Caco-2 (cell line): ENCODE measurements at regions of chr20 and their contacts with region 1.

Region 1: GRCh38 chr20:4864311-4864752 is 137.0 kb downstream of the SLC23A2 start:
- DNase-seq: peak in 1 of 2 experiments; percentile 30
- H3K4me3 ChIP-seq: no peak overlapping the region
- H3K4me3 Mint-ChIP-seq: no peak overlapping the region
- H3K27ac Mint-ChIP-seq: peak overlapping the region; percentile 26
- H3K4me1 ChIP-seq: peaks cover 6% of the 10 kb centered on the region
- H3K4me1 Mint-ChIP-seq: peaks cover 25% of the 10 kb centered on the region
- H3K27me3 ChIP-seq: no peaks in the 10 kb centered on the region
- H3K27me3 Mint-ChIP-seq: no peaks in the 10 kb centered on the region
- CTCF ChIP-seq: no peak

Region 2: DNA sequence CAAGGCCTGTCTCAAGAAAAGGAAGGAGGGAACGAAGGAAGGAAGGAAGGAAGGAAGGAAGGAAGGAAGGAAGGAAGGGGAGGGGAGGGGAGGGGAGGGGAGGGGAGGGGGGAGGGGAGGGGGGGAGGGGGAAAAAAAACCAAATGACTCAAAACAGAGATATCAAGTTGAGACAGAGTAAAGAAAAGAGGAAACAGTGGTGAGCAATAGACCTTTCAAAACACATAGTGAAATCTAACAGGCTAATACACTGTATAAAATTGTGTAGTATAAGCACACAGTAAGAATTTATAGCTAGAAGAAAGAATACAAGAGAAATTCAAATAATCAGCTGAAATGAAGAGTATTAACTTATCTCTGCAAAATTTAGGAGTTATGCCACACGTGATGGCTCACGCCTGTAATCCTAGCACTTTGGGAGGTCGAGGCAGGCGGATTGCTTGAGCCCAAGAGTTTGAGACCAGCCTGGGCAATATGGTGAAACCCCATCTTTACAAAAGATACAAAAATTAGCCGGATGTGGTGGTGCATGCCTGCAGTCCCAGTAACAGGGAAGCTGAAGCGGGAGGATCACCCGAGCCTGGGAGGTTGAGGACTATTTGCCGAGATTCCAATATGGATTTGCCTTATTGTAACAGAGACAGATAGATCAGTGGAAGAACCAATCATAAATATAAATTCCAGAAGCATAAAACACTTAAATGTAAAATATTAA is 19.4 kb before region 1 on chr20:
- CTCF ChIA-PET with region 1: no interaction called
- POLR2A ChIA-PET with region 1: no interaction called
- intact Hi-C with region 1: no loop called
- DNase-seq: no peak
- H3K4me3 ChIP-seq: no peak overlapping the region
- H3K4me3 Mint-ChIP-seq: no peak overlapping the region
- H3K27ac Mint-ChIP-seq: no peak overlapping the region
- H3K4me1 ChIP-seq: no peaks in the 10 kb centered on the region
- H3K4me1 Mint-ChIP-seq: no peaks in the 10 kb centered on the region
- H3K27me3 ChIP-seq: no peaks in the 10 kb centered on the region
- H3K27me3 Mint-ChIP-seq: no peaks in the 10 kb centered on the region
- CTCF ChIP-seq: no peak

Region 3: DNA sequence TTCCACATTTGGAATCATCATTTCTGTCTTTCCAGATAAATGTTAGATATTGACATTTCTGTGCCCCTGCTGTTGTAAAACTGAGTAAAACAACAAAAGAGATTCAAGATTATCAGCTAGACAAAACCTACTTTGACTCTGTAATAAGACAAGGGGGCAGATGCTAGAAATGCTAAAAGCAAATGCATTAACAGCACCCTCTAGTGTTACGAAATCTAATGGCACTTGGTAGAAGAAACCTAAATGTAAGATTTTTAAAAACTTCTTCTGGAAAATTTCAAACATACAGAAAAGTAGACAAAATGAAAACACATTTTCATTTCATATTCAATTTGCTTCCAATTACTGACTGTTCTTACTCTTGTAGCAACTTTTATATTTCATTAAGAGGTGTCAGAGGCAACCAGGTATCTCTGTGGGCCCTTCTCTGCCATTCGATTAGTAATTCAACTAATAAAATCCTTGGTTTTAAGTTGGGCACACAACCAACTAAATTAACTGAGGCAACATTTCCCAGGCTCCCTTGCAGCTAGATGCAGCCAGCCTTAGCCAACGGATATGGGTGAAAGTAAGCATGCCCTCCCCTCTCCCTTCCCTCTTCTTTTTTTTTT is 92.0 kb after region 1 on chr20:
- CTCF ChIA-PET with region 1: no interaction called
- POLR2A ChIA-PET with region 1: no interaction called
- intact Hi-C with region 1: loop called (anchors 1 kb)
- DNase-seq: peak in 1 of 2 experiments; percentile 58
- H3K4me3 ChIP-seq: no peak overlapping the region
- H3K4me3 Mint-ChIP-seq: no peak overlapping the region
- H3K27ac Mint-ChIP-seq: no peak overlapping the region
- H3K4me1 ChIP-seq: peaks cover under 1% of the 10 kb centered on the region
- H3K4me1 Mint-ChIP-seq: no peaks in the 10 kb centered on the region
- H3K27me3 ChIP-seq: no peaks in the 10 kb centered on the region
- H3K27me3 Mint-ChIP-seq: no peaks in the 10 kb centered on the region
- CTCF ChIP-seq: peak; percentile 76 to 88